ENCODE measurements at regions of chr1 and their contacts with region 1.

Region 1: GRCh38 chr1:151762941-151763921 is at the start of gene MRPL9:
- DNase-seq: peak; percentile 82 to 85 (median 83)
- H3K4me3 ChIP-seq: peak within 1 kb of the TSS; percentile 34 to 66
- H3K4me3 Mint-ChIP-seq: peak within 1 kb of the TSS; percentile 86 to 97 (median 92)
- H3K27ac ChIP-seq: peak within 1 kb of the TSS; percentile 72
- H3K27ac Mint-ChIP-seq: peak within 1 kb of the TSS; percentile 90 to 99 (median 96)
- H3K4me1 ChIP-seq: peaks cover 16% of the 10 kb centered on the region
- H3K4me1 Mint-ChIP-seq: peaks cover 12 to 30% (median 21%) of the 10 kb centered on the region in 4 donors
- H3K27me3 ChIP-seq: no peaks in the 10 kb centered on the region
- H3K27me3 Mint-ChIP-seq: no peaks in the 10 kb centered on the region
- total RNA-seq, gene MRPL9: 75.5 to 82.8 TPM

Region 2: DNA sequence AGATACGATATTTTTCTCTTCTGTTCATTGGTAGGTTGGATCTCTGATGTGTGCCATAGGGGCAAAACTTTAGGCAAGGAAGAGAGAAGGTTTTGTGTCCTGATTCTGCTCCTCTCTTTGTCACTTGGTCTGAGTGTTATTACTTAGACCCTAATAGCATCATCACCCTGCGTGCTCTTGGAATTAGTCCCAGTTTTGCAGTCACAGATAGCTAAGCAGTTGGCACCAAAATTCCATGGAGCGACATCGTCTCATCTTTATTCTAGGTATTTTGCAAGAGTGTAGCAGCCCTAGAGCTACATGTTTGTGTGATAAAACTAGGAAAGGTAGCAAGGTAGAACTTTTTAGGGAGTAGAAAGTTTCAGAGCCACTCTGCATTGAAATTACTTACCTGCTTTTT is 541.1 kb before region 1 on chr1:
- CTCF ChIA-PET with region 1: no interaction called
- POLR2A ChIA-PET with region 1: no interaction called
- intact Hi-C with region 1: no loop called
- DNase-seq: no peak
- H3K4me3 ChIP-seq: no peak overlapping the region
- H3K4me3 Mint-ChIP-seq: no peak overlapping the region
- H3K27ac ChIP-seq: no peak overlapping the region
- H3K27ac Mint-ChIP-seq: peak overlapping the region in 1 of 7 donors; percentile 63
- H3K4me1 ChIP-seq: no peaks in the 10 kb centered on the region
- H3K4me1 Mint-ChIP-seq: peaks cover under 1 to 11% (median 3%) of the 10 kb centered on the region in 4 donors
- H3K27me3 ChIP-seq: no peaks in the 10 kb centered on the region
- H3K27me3 Mint-ChIP-seq: no peaks in the 10 kb centered on the region

Region 3: DNA sequence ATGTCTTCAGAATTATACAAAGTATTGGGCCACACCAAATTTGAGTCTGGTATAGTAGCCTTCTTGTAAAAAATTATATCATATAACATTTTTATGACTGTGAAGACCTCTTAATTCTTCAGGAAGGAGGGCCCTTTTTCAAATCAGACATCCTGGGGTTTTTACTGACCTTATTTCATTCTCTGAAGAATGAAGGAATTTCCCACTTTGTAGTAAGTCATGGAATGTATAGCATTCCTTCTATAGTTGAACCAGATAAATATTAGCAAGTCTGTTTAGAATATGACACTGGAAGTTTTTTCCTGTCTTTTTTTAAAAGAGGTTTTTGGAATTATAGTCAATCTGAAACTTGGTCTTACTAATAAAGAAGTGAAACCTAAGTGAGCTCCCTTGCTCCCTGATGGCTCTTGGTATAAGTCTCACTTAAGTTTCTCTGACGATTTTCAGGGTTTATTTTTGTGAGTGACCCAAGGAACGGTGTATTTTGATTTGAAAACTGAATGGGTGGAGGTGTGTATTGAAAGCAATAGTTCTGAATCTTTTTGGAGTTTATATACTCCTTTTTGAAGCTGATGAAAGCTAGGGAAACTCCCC is 127.7 kb before region 1 on chr1:
- CTCF ChIA-PET with region 1: no interaction called
- POLR2A ChIA-PET with region 1: no interaction called
- intact Hi-C with region 1: no loop called
- DNase-seq: no peak
- H3K4me3 ChIP-seq: no peak overlapping the region
- H3K4me3 Mint-ChIP-seq: no peak overlapping the region
- H3K27ac ChIP-seq: no peak overlapping the region
- H3K27ac Mint-ChIP-seq: no peak overlapping the region
- H3K4me1 ChIP-seq: no peaks in the 10 kb centered on the region
- H3K4me1 Mint-ChIP-seq: peaks cover 5 to 16% (median 12%) of the 10 kb centered on the region in 4 donors
- H3K27me3 ChIP-seq: no peaks in the 10 kb centered on the region
- H3K27me3 Mint-ChIP-seq: no peaks in the 10 kb centered on the region

Region 4: DNA sequence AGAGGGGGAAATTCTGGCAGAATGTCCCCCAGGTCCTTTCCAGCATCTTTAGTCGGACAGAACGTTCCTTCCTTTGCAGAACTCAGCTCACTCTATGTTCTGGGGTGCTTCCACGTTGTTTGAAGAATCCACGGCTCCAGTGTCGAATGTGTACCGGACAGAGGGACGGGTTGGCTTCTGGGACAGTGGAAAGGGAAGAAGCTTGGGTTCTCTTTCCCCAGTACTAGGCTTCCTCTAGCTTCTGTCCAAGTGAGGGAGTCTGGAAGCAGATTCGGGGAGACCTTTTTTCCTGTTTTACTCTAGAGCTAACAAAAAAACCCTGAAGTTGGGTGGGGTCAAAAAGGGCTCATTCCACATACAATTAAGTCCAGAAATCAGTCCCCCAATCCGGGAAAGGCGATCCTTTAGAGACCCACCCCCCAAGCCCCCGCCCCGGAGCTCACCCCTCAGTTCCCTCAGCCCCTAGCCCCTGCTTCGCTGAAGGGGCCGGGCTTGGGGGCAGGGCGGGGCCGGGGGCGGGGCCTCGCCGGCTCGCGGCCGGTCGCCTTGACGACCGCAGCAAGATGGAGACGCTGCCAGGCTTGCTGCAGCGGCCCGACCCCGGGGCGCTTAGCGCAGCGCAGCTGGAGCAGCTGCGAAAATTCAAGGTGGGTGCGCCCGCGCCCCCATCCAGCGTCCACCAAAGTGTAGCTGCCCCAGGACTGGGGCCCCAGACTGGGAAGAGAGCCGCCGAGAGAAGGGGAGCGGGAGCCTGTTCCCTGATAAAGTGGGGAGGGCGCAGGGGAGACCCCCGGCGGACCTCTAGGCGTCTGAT is 42.0 kb before region 1 on chr1 and contains the start of gene RIIAD1:
- CTCF ChIA-PET with region 1: no interaction called
- POLR2A ChIA-PET with region 1: no interaction called
- intact Hi-C with region 1: no loop called
- DNase-seq: peak; percentile 31 to 56 (median 46)
- H3K4me3 ChIP-seq: peak within 1 kb of the TSS; percentile 28 to 42
- H3K4me3 Mint-ChIP-seq: peak within 1 kb of the TSS; percentile 74 to 88 (median 80)
- H3K27ac ChIP-seq: no peak within 1 kb of the TSS
- H3K27ac Mint-ChIP-seq: peak within 1 kb of the TSS in 6 of 7 donors; percentile 55 to 86 (median 75)
- H3K4me1 ChIP-seq: peaks cover 27% of the 10 kb centered on the region
- H3K4me1 Mint-ChIP-seq: peaks cover 14 to 36% (median 26%) of the 10 kb centered on the region in 4 donors
- H3K27me3 ChIP-seq: peaks cover 32% of the 10 kb centered on the region
- H3K27me3 Mint-ChIP-seq: peaks cover 32 to 45% of the 10 kb centered on the region in 2 donors
- total RNA-seq, gene RIIAD1: not detected

Region 5: DNA sequence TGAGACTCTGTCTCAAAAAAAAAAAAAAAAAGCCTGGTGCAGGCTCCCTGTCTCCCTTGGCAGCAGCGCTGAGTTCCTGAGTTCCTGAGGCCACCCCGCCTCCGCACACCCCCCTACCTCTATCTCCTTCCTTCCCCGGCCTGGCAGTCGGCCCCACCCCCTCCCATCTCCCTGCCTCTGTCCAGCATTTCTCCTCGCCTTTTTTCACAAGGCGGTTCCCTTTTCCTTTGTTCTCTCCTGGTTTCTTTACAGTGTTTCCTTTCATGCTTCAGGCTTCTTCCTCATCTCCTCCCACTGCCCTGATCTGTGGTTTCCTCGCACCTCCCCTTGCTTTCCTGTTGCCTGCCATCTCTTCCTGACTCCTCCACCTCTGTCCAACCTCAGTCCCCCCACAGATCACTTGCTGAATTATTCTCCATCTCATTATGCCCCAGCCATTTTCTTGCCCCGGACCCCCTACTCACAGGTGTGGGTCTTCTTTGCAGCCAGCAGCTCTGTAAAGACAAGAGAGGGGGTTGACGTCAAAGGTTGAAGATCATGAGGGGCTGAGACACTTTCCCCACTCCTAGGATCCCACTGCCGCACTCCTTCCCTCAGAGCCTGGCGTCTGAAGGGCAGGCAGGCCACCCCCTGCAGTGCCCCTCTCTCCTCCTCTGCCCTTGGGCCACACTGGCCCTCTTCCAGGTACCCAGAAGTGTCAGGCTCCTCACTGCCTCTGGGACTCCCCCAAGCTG is 65.9 kb after region 1 on chr1:
- CTCF ChIA-PET with region 1: interaction called, 32 read pairs
- POLR2A ChIA-PET with region 1: interaction called, 18 read pairs
- intact Hi-C with region 1: no loop called
- DNase-seq: no peak
- H3K4me3 ChIP-seq: no peak overlapping the region
- H3K4me3 Mint-ChIP-seq: peak overlapping the region; percentile 60 to 94 (median 76)
- H3K27ac ChIP-seq: peak overlapping the region; percentile 62
- H3K27ac Mint-ChIP-seq: peak overlapping the region; percentile 88 to 96 (median 93)
- H3K4me1 ChIP-seq: peaks cover 90% of the 10 kb centered on the region
- H3K4me1 Mint-ChIP-seq: peaks cover 55 to 98% (median 75%) of the 10 kb centered on the region in 4 donors
- H3K27me3 ChIP-seq: no peaks in the 10 kb centered on the region
- H3K27me3 Mint-ChIP-seq: no peaks in the 10 kb centered on the region

Measured in CD4-positive, alpha-beta memory T cell (primary cell).